Motor neuron (in vitro differentiated cells): ENCODE measurements at regions of chr12 and their contacts with region 1.

Region 1: DNA sequence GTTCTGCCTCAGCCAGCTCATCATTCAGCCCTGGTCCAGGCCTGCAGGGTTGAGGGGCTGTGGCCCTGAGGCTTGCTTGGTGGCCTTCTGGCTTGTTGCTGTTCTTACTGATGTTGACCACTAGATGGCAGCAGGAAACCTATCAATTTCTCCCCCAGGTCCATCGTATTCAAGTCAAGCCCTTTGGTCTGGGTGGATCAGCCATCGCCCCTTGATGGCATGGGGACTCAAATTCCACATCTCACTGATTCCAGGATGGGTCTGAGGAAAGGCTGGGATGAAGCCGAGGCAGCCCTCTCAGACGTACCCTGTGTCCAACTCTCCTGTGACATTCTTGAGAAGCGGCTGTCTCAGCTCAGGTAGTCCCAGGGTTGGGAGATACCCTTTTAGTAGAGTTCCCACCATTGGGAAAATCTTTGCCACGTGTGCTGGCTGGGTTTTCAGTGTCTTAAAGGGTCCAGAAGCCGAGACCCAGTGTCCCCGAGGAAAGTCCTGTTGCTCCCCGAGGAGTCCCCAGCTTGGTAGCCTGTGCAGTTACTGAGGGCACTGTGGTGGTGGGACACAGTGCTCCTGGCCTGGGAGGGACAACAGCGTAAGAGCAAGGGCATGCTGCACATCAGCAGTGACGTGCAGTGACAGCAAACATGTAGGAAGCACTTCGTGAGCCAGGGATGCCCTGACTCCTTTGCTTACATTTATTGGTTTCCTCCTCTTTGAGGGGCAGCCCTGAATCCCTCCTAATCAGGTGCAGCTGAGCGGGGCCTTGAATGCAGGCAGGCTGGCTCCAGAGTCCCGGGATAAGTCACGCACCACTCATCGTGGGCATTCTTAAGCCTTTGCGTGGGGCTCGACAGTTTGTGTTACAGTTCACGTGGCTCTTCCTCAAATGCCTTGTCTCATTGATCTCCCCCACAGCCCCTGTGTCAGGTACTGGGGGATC is 58.6 kb downstream of the TSPAN9 start:
- ATAC-seq: peak; percentile 50 to 85 (median 63)
- H3K4me3 ChIP-seq: no peak overlapping the region
- H3K27ac ChIP-seq: no peak overlapping the region
- H3K4me1 ChIP-seq: peaks cover 20 to 25% of the 10 kb centered on the region in 2 donors

Region 2: GRCh38 chr12:2451025-2451424 is 684.8 kb before region 1 on chr12:
- in situ Hi-C with region 1: no loop called
- ATAC-seq: no peak
- H3K4me3 ChIP-seq: no peak overlapping the region
- H3K27ac ChIP-seq: no peak overlapping the region
- H3K4me1 ChIP-seq: no peaks in the 10 kb centered on the region

Region 3: GRCh38 chr12:3202734-3203446 is 67.1 kb after region 1 on chr12:
- in situ Hi-C with region 1: loop called in 1 of 9 experiments (anchors 10 kb)
- ATAC-seq: no peak
- H3K4me3 ChIP-seq: no peak overlapping the region
- H3K27ac ChIP-seq: no peak overlapping the region
- H3K4me1 ChIP-seq: peaks cover 46 to 55% of the 10 kb centered on the region in 2 donors

Region 4: GRCh38 chr12:3252450-3252891 is 116.7 kb after region 1 on chr12:
- in situ Hi-C with region 1: loop called in 1 of 9 experiments (anchors 25 kb)
- ATAC-seq: peak in 4 of 8 experiments; percentile 9 to 56 (median 46)
- H3K4me3 ChIP-seq: no peak overlapping the region
- H3K27ac ChIP-seq: peak overlapping the region; percentile 9 to 34
- H3K4me1 ChIP-seq: peaks cover 50 to 58% of the 10 kb centered on the region in 2 donors

Region 5: DNA sequence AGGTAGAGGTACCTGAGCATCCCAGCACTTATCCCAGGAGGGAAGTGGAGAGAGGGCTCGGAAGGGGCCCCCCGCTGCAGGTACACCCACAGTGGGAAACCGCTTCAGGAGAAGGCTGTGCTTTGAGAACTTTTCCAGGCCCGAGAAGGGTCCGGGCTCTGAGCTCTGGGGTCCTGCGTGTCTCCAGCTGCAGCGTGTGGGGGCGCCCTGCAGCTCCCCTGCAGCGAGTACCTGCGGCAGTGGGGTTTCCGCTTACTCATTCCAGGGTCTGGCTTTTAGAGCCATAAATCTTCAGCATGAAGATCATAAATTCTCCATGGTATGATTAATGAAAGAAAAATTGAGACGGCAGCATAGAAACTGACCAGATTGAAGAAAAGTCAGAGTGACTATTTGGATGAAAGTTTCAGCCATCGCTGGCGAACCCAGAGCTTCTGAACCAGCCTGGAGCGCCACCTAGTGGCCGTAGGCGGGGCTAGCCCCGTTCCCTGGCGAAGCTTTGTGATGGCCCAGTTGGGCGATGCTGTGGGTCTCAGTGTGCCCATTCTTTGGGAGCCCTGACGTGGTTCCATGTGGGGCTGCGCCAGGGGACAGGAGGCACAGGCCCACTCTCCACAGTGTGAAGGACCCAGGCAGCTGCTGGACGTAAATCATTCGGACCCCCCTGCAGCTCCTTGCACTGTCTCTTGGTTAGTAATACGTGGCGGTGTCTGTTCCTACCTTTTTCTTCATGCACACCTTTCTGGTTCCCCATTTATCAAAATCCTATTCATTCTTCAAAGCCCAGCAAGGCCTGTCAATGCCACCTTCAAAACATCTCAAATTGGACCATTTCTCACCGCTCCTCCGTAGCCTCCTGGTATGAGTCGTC is 139.6 kb after region 1 on chr12:
- in situ Hi-C with region 1: loop called (anchors 5 to 25 kb)
- ATAC-seq: peak; percentile 75 to 91 (median 80)
- H3K4me3 ChIP-seq: no peak overlapping the region
- H3K27ac ChIP-seq: no peak overlapping the region
- H3K4me1 ChIP-seq: peaks cover 0 to 10% of the 10 kb centered on the region in 2 donors

Region 6: GRCh38 chr12:3803865-3804472 is 668.2 kb after region 1 on chr12:
- in situ Hi-C with region 1: loop called in 1 of 9 experiments (anchors 25 kb)
- ATAC-seq: peak; percentile 63 to 92 (median 80)
- H3K4me3 ChIP-seq: no peak overlapping the region
- H3K27ac ChIP-seq: no peak overlapping the region
- H3K4me1 ChIP-seq: peaks cover 0 to 4% of the 10 kb centered on the region in 2 donors